H1 (cell line): ENCODE measurements at regions of chr1 and their contacts with region 1.

Region 1: GRCh38 chr1:230401763-230402294 is 24.3 kb downstream of the PGBD5 start:
- DNase-seq: no peak
- H3K4me3 ChIP-seq: no peak overlapping the region
- H3K27ac ChIP-seq: peak overlapping the region; percentile 14
- H3K4me1 ChIP-seq: peaks cover 0 to 23% (median 12%) of the 10 kb centered on the region in 4 experiments; a peak in 6 of 7 replicates
- H3K27me3 ChIP-seq: no peaks in the 10 kb centered on the region
- CTCF ChIP-seq: no peak
- EP300 ChIP-seq: no peak
- POLR2A ChIP-seq: no peak
- RAD21 ChIP-seq: no peak

Region 2: GRCh38 chr1:230270559-230271281 is 131.1 kb before region 1 on chr1:
- CTCF ChIA-PET with region 1: no interaction called
- POLR2A ChIA-PET with region 1: no interaction called
- DNase-seq: no peak
- H3K4me3 ChIP-seq: no peak overlapping the region
- H3K27ac ChIP-seq: no peak overlapping the region
- H3K4me1 ChIP-seq: peaks cover 0 to 5% (median 1%) of the 10 kb centered on the region in 4 experiments; a peak in 3 of 7 replicates
- H3K27me3 ChIP-seq: no peaks in the 10 kb centered on the region
- CTCF ChIP-seq: no peak
- EP300 ChIP-seq: no peak
- POLR2A ChIP-seq: no peak
- RAD21 ChIP-seq: no peak

Region 3: DNA sequence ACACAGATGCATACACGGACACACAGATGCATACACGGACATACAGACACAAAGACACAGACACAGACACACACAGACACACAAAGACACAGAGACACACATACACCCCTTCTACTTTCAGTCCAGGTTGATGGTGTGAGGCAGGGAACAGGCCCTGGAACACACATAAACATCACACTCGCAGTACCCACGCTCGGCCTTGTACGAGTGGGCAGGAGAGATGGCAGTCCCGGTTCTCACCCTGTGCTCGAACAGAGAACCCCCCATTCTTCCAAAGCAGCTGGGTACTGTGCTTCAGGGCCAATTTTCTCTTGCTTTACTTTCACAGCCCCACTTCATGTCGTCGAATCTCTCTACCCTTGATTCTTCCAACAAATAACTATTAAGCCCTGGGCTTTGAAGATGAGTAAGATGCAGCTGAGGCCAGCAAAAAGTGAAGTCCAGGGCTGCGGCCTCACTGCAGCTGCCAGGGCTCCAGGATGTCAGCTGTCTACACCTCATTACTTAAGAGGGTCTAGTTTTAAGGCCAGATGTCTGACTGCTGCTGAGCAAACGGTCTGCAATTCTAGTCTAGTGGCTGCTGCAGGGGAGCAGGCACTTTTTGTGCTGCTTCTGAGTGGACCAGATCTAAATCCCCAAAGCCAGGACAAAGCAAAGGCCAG is 65.8 kb before region 1 on chr1:
- CTCF ChIA-PET with region 1: no interaction called
- POLR2A ChIA-PET with region 1: no interaction called
- DNase-seq: no peak
- H3K4me3 ChIP-seq: no peak overlapping the region
- H3K27ac ChIP-seq: no peak overlapping the region
- H3K4me1 ChIP-seq: peaks cover 3 to 17% (median 9%) of the 10 kb centered on the region in 4 experiments
- H3K27me3 ChIP-seq: no peaks in the 10 kb centered on the region
- CTCF ChIP-seq: no peak
- EP300 ChIP-seq: no peak
- POLR2A ChIP-seq: no peak
- RAD21 ChIP-seq: no peak

Region 4: GRCh38 chr1:230415405-230416132 is 13.7 kb after region 1 on chr1:
- CTCF ChIA-PET with region 1: interaction called, 14 read pairs
- POLR2A ChIA-PET with region 1: interaction called, 4 read pairs
- DNase-seq: no peak
- H3K4me3 ChIP-seq: no peak overlapping the region
- H3K27ac ChIP-seq: no peak overlapping the region
- H3K4me1 ChIP-seq: peaks cover 0 to 5% (median 0%) of the 10 kb centered on the region in 4 experiments; a peak in 1 of 7 replicates
- H3K27me3 ChIP-seq: no peaks in the 10 kb centered on the region
- CTCF ChIP-seq: no peak
- EP300 ChIP-seq: no peak
- POLR2A ChIP-seq: no peak
- RAD21 ChIP-seq: no peak